Activated T-helper 2 cell treated with anti-CD3 and anti-CD28 coated beads, Interferon-gamma antibody, Interleukin-2, Interleukin-4, amounts not matched to agents 10 μg/mL and 5 μg/mL and 100 μg/mL, durations not matched to agents 14 hours and 24 hours and 36 hours (primary cell): ENCODE measurements at regions of chr5 and their contacts with region 1.

Region 1: DNA sequence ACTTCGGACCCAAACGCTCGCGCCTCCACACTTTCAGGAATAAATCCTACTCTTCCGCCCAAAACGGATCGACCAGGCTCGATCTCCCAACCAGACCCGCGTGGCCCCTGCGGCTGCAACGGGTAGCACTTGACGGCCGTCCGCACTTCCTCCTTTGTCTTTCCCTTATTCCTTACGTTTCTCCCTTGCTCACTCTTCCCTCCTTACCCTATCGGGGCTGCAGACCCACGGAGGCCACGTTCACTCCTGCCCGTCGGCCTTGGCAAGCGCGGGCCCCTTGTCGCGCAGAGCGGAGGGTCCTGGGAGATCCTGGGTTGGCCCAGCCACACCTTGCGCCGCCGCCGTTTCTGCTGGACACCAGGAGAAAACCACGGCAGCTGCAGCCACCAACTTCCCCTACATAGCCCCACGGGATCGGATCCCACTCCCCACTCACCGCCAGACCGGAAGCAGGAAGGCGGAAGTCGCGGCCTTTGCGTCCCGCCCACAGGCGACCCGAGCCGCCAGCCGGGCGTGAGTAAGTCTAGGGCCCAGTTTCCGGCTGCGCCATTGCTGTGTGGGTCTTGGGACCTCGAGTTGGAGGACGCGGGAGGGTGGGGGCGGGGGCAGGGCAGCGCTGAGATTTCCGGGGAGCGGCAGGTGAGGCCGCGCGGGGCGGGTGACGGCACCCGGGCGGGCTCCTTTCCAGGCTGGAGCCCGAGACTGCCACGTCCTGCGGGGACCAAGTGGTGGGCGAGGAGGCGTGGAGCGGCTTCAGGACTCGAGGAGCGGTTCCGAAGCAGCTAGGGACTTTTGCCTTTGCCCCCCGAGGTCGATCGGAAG is at the start of gene SMIM15:
- DNase-seq: peak; percentile 79
- H3K4me3 Mint-ChIP-seq: peak within 1 kb of the TSS; percentile 94
- H3K27ac Mint-ChIP-seq: peak within 1 kb of the TSS; percentile 92
- H3K4me1 Mint-ChIP-seq: peaks cover 38% of the 10 kb centered on the region
- H3K27me3 Mint-ChIP-seq: no peaks in the 10 kb centered on the region
- total RNA-seq, gene SMIM15: 73.2 and 78.3 TPM in 2 replicates

Region 2: GRCh38 chr5:60944904-60945812 is 217.1 kb before region 1 on chr5 and contains the starts of genes ERCC8 and NDUFAF2:
- intact Hi-C with region 1: loop called (anchors 5 kb)
- DNase-seq: peak; percentile 85
- H3K4me3 Mint-ChIP-seq: no peak within 1 kb of the TSS
- H3K27ac Mint-ChIP-seq: peak within 1 kb of the TSS; percentile 75
- H3K4me1 Mint-ChIP-seq: peaks cover 19% of the 10 kb centered on the region
- H3K27me3 Mint-ChIP-seq: no peaks in the 10 kb centered on the region
- total RNA-seq, gene ERCC8: 9.3 and 10.2 TPM in 2 replicates
- total RNA-seq, gene NDUFAF2: 32.6 and 39.8 TPM in 2 replicates

Region 3: DNA sequence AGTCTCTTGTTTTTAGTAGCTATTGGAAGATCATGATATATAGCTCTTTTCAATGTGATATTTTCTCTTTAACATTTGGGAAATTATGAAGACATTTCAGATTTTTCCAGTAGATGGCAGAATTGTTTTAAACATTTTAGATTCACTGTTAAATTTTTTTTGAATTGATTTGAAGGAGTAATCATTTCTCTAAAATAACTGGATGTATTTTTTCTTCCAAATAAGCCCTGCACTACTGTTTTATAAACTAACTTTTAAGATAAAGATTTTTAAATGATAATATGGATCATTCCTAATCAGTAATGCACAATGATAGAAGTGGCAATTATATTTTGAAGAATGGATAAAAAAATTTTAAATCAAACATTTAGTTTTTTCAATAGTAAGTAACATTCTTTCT is 203.1 kb before region 1 on chr5:
- intact Hi-C with region 1: no loop called
- DNase-seq: no peak
- H3K4me3 Mint-ChIP-seq: no peak overlapping the region
- H3K27ac Mint-ChIP-seq: no peak overlapping the region
- H3K4me1 Mint-ChIP-seq: peaks cover 2% of the 10 kb centered on the region
- H3K27me3 Mint-ChIP-seq: no peaks in the 10 kb centered on the region

Region 4: GRCh38 chr5:61010467-61011454 is 151.5 kb before region 1 on chr5:
- intact Hi-C with region 1: no loop called
- DNase-seq: no peak
- H3K4me3 Mint-ChIP-seq: no peak overlapping the region
- H3K27ac Mint-ChIP-seq: no peak overlapping the region
- H3K4me1 Mint-ChIP-seq: no peaks in the 10 kb centered on the region
- H3K27me3 Mint-ChIP-seq: no peaks in the 10 kb centered on the region

Region 5: GRCh38 chr5:61184708-61185107 is 22.5 kb after region 1 on chr5:
- intact Hi-C with region 1: loop called (anchors 2 kb)
- DNase-seq: no peak
- H3K4me3 Mint-ChIP-seq: no peak overlapping the region
- H3K27ac Mint-ChIP-seq: no peak overlapping the region
- H3K4me1 Mint-ChIP-seq: peaks cover 13% of the 10 kb centered on the region
- H3K27me3 Mint-ChIP-seq: peaks cover 7% of the 10 kb centered on the region

Region 6: GRCh38 chr5:61280205-61280604 is 118.0 kb after region 1 on chr5:
- intact Hi-C with region 1: loop called (anchors 5 kb)
- DNase-seq: no peak
- H3K4me3 Mint-ChIP-seq: no peak overlapping the region
- H3K27ac Mint-ChIP-seq: no peak overlapping the region
- H3K4me1 Mint-ChIP-seq: peaks cover 30% of the 10 kb centered on the region
- H3K27me3 Mint-ChIP-seq: no peaks in the 10 kb centered on the region

Region 7: DNA sequence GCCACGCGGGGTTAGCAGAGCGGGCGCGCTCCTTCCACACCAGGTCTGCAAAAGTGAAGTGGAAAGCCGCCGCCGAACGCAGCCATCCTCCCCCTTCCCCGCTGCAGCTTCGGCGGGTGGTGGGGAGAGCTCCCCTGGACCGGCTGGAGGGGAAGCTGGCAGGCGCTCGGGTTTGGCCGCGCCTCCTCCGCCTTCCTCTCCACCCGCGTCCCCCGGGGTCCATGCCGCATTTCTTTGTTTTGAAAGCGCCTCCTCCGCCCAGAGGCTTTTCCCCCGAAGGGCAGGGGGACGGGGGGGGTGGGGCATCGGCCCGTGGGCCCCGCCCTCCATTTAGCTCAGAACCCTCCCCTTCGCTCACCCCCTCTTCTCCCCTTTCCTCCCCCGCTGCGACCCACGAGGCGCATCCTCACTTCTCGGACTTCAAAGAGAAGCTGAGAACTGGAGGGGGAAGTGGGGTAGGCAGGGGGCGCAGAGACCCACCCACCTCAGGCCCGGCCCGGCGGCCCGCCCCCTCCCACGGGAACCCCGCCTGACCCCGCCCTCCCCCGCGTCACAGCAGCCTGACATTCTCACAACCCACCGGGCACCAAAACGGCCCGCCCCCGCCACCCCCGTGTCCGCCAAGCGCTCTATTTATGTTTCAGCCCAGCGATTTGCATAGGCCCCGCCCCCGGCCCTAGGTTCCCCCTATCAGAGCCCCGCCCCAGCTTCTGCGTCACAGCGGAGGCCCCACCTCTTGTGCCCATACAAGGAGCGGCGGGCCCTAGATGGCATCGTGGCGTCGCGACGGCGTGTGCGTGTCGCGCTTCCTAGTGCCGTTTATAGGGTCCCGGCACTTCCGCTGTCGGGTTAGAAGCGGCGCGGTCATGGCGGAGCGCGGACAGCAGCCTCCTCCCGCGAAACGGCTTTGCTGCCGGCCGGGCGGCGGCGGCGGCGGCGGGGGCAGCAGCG is 169.5 kb after region 1 on chr5 and contains the start of gene ZSWIM6:
- intact Hi-C with region 1: loop called (anchors 1 kb)
- DNase-seq: peak; percentile 96
- H3K4me3 Mint-ChIP-seq: peak within 1 kb of the TSS; percentile 95
- H3K27ac Mint-ChIP-seq: peak within 1 kb of the TSS; percentile 96
- H3K4me1 Mint-ChIP-seq: peaks cover 49% of the 10 kb centered on the region
- H3K27me3 Mint-ChIP-seq: peaks cover 33% of the 10 kb centered on the region
- total RNA-seq, gene ZSWIM6: 8.9 TPM in 2 replicates

Region 8: GRCh38 chr5:61575103-61575502 is 412.9 kb after region 1 on chr5:
- intact Hi-C with region 1: loop called (anchors 5 kb)
- DNase-seq: no peak
- H3K4me3 Mint-ChIP-seq: no peak overlapping the region
- H3K27ac Mint-ChIP-seq: no peak overlapping the region
- H3K4me1 Mint-ChIP-seq: no peaks in the 10 kb centered on the region
- H3K27me3 Mint-ChIP-seq: no peaks in the 10 kb centered on the region